ENCODE measurements at regions of chr3 and their contacts with region 1.

Region 1: GRCh38 chr3:138923531-138923994 is 23.4 kb downstream of the FOXL2 start:
- DNase-seq: peak; percentile 89 to 95 (median 89)
- H3K4me3 ChIP-seq: no peak overlapping the region
- H3K27ac ChIP-seq: no peak overlapping the region
- H3K4me1 ChIP-seq: peaks cover 0 to 2% (median 0%) of the 10 kb centered on the region in 4 experiments
- H3K27me3 ChIP-seq: peaks cover 0 to 2% (median 0%) of the 10 kb centered on the region in 5 experiments

Region 2: DNA sequence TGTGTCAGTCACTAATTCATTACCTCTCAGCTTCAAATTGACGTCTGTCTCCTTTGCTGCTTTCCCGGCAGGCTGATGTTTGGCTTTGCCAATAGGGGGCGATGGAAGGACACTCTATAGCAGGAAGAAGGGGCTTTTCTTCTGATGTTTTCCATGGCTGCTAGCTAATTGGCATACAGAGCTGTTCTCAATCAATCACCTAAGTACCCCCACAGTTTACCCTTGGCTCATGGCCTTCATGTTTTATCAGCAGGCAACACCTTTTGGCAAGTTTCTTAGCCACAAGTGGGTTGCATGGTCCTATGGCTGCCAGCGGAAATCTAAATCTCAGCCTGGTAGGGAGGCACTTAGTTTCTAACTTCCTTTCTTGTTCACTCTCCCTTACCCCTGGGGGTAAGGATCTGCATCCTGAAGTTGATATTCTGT is 444.1 kb before region 1 on chr3:
- CTCF ChIA-PET with region 1: interaction called, 14 read pairs
- POLR2A ChIA-PET with region 1: no interaction called
- DNase-seq: peak; percentile 69 to 91 (median 84)
- H3K4me3 ChIP-seq: no peak overlapping the region
- H3K27ac ChIP-seq: no peak overlapping the region
- H3K4me1 ChIP-seq: peaks cover 0 to 4% (median 0%) of the 10 kb centered on the region in 4 experiments
- H3K27me3 ChIP-seq: no peaks in the 10 kb centered on the region

Region 3: DNA sequence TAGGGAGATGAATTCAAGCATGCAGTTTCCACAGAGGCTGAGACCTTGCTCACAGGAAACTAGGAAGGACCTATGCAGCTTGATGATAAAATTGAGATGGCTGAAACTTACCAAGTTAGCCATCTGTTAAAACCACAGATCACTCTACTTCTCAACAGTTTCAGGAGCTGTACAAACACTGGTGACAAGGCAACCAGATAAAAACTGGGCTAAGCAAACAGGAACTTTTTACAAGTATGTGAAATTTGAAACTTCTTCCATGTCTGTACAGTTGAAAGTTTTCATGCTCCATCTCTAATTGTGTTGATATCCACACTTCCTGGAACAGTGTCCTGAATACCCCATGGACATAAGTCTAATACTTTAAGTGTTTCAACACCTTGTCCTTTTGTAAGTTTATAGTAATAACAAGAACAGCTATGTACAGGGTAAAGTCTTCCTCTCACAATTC is 236.8 kb before region 1 on chr3:
- CTCF ChIA-PET with region 1: interaction called, 24 read pairs
- POLR2A ChIA-PET with region 1: no interaction called
- DNase-seq: peak; percentile 91 to 98 (median 96)
- H3K4me3 ChIP-seq: no peak overlapping the region
- H3K27ac ChIP-seq: peak overlapping the region; percentile 80 to 90
- H3K4me1 ChIP-seq: peaks cover 9 to 70% (median 25%) of the 10 kb centered on the region in 4 experiments
- H3K27me3 ChIP-seq: no peaks in the 10 kb centered on the region

Region 4: GRCh38 chr3:138935848-138936740 is 12.5 kb after region 1 on chr3:
- CTCF ChIA-PET with region 1: interaction called, 54 read pairs
- POLR2A ChIA-PET with region 1: interaction called, 3 read pairs
- DNase-seq: peak; percentile 59 to 72 (median 70)
- H3K4me3 ChIP-seq: peak overlapping the region; percentile 40 to 76 (median 58)
- H3K27ac ChIP-seq: no peak overlapping the region
- H3K4me1 ChIP-seq: peaks cover 2 to 46% (median 36%) of the 10 kb centered on the region in 4 experiments
- H3K27me3 ChIP-seq: peaks cover 4 to 76% (median 48%) of the 10 kb centered on the region in 5 experiments

Measured in common myeloid progenitor, CD34-positive (primary cell).